Cardiac septum (tissue), 1 donor: ENCODE measurements at regions of chr17 and their contacts with region 1.

Region 1: DNA sequence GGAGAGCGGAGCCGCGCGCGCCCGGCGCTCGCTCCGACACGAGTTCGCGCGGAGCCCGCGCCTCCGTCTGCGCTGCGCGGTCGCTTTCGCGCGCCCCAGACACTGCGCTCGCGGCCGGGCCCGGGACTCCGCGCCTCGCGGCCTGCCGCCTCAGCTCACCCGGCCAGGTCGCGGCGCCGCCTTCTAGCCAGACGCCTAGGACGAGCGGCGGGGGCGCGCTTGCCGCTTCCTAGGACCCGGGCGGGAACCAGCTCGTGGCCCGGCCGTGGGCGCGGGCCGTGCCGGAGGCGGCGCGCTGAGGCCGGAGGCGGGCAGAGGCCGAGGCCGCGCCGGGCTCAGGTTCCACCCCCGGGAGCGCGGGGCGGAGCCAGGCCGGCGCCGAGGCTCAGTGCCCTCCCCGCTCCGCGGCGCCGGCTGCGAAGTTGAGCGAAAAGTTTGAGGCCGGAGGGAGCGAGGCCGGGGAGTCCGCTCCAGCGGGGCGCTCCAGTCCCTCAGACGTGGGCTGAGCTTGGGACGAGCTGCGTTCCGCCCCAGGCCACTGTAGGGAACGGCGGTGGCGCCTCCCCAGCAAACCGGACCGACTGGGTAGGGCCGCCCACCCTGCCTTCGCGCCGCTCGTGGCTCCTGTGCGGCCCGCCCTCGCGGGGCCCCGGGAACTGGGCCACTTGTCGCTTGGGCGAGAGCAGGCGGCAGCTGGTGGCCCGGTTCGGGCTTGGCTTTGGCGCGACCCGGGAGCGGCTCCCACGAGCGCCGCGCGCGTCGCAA is at the start of gene SPHK1:
- DNase-seq: peak; percentile 90
- total RNA-seq, gene SPHK1: 11.0 TPM

Region 2: GRCh38 chr17:76327696-76328095 is 56.7 kb before region 1 on chr17:
- intact Hi-C with region 1: loop called (anchors 5 kb)
- DNase-seq: no peak

Region 3: GRCh38 chr17:76353599-76354316 is 30.6 kb before region 1 on chr17 and contains the start of gene PRPSAP1:
- intact Hi-C with region 1: loop called (anchors 1 kb)
- DNase-seq: peak; percentile 94
- total RNA-seq, gene PRPSAP1: 25.8 TPM

Region 4: DNA sequence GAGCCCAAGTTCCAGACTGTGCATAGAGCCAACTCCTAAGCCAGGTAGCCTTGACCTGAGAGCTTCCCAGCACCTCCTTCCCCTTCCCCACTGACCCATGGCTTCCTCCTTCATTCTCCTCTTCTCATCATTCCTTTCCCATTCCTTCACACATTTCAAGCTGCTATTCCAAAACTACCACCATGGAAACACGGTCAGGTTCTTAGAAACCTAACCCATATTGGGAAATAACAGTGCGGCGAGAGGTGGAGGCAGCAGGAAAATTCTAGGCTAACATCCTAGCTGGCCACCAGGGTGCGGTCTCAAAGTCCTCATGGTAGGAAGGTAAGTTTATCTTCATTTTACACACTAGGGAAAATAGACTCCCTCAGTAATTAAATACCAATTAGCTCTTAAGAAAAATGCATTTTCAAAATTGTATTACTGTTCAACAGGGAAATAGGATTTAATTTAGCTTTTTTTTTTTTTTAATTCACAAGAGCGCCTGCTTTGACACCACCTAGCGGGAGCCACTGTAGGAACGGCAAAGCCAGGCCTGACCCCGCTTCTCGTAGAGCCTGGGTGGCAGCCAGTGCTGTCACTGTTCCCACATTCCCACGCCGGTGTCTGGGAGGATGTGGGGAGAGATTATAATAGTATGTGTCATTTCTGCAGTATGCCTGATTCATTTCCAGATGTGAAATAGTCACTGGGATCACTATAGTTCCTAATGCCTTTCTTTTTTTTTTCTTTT is 14.0 kb before region 1 on chr17:
- intact Hi-C with region 1: loop called (anchors 2 kb)
- DNase-seq: peak; percentile 92